Activated CD8-positive, alpha-beta T cell treated with anti-CD3 and anti-CD28 coated beads, Interleukin-2, amount 10 ng/mL, durations not matched to agents 7 days and 5 days (primary cell): ENCODE measurements at regions of chr17 and their contacts with region 1.

Region 1: GRCh38 chr17:50397111-50397918 is at the start of gene LRRC59:
- DNase-seq: peak; percentile 94
- ATAC-seq: peak; percentile 96
- H3K4me3 Mint-ChIP-seq: peak within 1 kb of the TSS; percentile 93
- H3K27ac Mint-ChIP-seq: peak within 1 kb of the TSS; percentile 94
- H3K4me1 Mint-ChIP-seq: peaks cover 27% of the 10 kb centered on the region
- H3K27me3 Mint-ChIP-seq: no peaks in the 10 kb centered on the region
- total RNA-seq, gene LRRC59: 77.7 to 77.9 TPM

Region 2: GRCh38 chr17:50372758-50373556 is 24.4 kb before region 1 on chr17 and contains the starts of genes EME1 and MRPL27:
- CTCF ChIA-PET with region 1: interaction called, 50 read pairs
- POLR2A ChIA-PET with region 1: interaction called, 53 read pairs
- DNase-seq: peak; percentile 93
- ATAC-seq: peak; percentile 94
- H3K4me3 Mint-ChIP-seq: peak within 1 kb of the TSS; percentile 99
- H3K27ac Mint-ChIP-seq: peak within 1 kb of the TSS; percentile 100
- H3K4me1 Mint-ChIP-seq: peaks cover 44% of the 10 kb centered on the region
- H3K27me3 Mint-ChIP-seq: no peaks in the 10 kb centered on the region
- total RNA-seq, gene EME1: 23.5 to 27.8 TPM
- total RNA-seq, gene MRPL27: 81.0 to 85.4 TPM

Region 3: DNA sequence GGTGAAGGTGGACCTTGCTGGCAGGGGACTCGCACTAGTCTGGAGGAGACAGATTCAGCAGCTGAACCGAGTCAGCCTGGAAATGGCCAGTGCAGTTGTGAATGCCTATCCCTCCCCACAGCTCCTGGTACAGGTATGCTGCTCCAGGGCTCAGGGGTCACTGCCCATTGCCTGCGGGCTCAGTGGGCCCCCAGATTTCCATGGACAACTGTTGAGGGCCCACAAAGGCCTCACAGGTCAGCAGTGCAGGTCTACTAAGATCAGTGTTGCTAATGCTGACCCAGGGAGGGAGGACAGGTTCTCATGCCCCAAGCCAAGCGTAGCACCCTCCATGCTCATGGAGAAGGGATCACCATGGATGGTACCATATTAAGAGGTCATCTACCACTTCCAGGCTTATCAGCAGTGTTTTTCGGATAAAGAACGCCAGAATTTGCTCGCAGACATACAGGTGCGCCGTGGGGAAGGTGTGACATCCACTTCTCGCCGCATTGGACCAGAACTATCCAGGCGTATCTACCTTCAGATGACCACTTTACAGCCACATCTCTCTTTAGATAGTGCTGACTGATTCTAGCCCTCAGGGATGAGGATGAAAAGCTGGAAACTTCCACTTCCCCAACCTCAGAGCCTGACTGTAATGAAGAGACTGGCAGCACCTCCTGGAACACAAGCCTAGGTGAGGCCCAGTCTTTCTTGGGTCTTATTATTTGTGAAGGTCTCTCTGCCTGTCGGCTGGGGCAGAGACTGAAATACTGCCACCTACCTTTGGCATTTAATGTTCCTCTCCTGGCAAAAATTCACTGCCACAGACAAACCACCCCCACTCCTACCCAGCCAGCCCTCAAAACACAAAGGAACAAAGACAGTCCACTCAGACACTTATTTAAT is 16.7 kb before region 1 on chr17:
- CTCF ChIA-PET with region 1: interaction called, 50 read pairs
- POLR2A ChIA-PET with region 1: interaction called, 53 read pairs
- DNase-seq: no peak
- ATAC-seq: no peak
- H3K4me3 Mint-ChIP-seq: no peak overlapping the region
- H3K27ac Mint-ChIP-seq: no peak overlapping the region
- H3K4me1 Mint-ChIP-seq: peaks cover 17% of the 10 kb centered on the region
- H3K27me3 Mint-ChIP-seq: no peaks in the 10 kb centered on the region

Region 4: DNA sequence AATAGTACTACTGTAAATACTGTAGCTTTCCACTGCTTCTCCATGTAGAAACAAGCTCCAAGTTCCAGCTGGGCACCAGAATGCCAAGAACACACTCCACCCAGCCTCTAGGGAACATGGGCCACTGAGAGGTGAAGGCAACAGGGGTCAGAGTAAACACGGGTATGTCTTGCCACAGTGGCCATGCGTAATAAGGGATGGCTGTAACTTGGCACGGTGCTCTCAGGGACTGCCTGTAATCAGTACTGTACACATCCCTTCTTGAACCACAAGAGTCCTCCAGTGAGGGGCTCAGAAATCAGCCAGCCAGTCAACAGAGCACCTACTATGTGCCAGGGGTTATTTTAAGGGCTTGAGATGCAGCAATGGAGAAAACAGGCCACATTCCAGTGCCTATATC is 10.8 kb before region 1 on chr17:
- CTCF ChIA-PET with region 1: interaction called, 31 read pairs
- POLR2A ChIA-PET with region 1: interaction called, 46 read pairs
- DNase-seq: no peak
- ATAC-seq: no peak
- H3K4me3 Mint-ChIP-seq: no peak overlapping the region
- H3K27ac Mint-ChIP-seq: no peak overlapping the region
- H3K4me1 Mint-ChIP-seq: no peaks in the 10 kb centered on the region
- H3K27me3 Mint-ChIP-seq: no peaks in the 10 kb centered on the region

Region 5: DNA sequence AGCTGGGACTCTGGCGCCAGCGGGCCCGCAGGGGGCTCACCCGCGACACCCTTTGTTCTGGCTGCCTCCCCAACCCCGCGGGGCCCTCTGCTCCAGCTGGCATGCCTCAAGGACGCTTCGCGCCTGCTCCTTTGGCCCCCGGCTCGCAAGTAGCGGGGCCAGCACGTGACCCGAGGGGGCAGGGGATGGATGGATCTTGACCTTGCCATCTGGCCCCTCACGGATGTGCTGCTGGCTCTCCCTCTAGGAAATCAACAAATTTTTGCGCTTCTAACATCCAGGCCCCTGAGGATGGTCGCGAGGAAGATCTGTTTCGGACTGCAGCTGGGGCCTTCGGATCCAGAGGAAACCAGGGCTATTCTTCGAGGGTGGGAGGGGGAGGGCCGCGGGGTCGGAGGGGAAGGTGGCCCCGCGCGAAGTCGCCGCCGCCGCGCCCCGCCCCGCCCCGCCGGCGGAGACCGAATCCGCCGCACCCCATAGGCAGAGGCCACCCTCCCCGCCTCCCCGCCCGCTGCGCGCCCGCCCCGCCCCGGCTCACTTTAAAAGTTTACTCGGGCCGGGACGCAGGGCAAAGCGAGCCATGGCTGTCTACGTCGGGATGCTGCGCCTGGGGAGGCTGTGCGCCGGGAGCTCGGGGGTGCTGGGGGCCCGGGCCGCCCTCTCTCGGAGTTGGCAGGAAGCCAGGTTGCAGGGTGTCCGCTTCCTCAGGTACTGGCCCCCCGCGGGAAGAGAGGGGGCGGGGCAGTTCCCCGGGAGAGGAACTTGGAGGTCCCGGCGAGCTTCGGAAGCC is 28.6 kb after region 1 on chr17 and contains the start of gene ACSF2:
- CTCF ChIA-PET with region 1: interaction called, 44 read pairs
- POLR2A ChIA-PET with region 1: interaction called, 19 read pairs
- DNase-seq: peak; percentile 81
- ATAC-seq: peak; percentile 87
- H3K4me3 Mint-ChIP-seq: peak within 1 kb of the TSS; percentile 82
- H3K27ac Mint-ChIP-seq: peak within 1 kb of the TSS; percentile 90
- H3K4me1 Mint-ChIP-seq: peaks cover 37% of the 10 kb centered on the region
- H3K27me3 Mint-ChIP-seq: no peaks in the 10 kb centered on the region
- total RNA-seq, gene ACSF2: 33.1 to 33.4 TPM

Region 6: DNA sequence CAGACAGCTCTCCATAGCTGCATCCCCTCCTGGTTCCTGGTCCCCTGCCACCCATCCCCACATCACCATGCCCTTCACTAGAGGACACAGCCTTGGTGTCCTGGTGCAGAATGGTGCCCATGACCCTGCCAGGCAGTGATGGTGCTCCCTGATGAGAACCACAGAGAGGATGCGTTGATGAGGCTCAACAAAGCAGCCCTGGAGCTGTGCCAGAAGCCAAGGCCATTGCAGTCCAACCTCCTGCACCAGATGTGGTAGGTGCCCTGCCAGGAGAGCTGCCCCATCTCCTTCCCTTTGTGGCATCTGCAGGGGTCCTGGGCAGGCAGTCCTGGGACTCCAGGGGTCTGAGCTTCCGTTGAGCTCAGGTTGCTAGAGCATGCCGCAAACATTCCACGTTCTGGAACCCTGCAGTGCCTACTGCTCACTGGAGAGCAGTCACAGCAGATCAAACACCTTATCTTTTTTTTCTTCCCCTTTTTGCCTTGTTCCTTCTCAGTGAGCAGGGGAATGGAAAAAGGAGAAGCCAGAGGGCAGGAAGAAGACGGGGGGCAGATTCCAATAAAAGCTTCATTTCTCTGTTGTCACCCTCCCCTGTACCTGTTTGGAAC is 129.9 kb after region 1 on chr17:
- CTCF ChIA-PET with region 1: no interaction called
- POLR2A ChIA-PET with region 1: no interaction called
- DNase-seq: no peak
- ATAC-seq: no peak
- H3K4me3 Mint-ChIP-seq: no peak overlapping the region
- H3K27ac Mint-ChIP-seq: no peak overlapping the region
- H3K4me1 Mint-ChIP-seq: peaks cover 4% of the 10 kb centered on the region
- H3K27me3 Mint-ChIP-seq: peaks cover 16% of the 10 kb centered on the region